ENCODE measurements at regions of chr11 and their contacts with region 1.

Region 1: DNA sequence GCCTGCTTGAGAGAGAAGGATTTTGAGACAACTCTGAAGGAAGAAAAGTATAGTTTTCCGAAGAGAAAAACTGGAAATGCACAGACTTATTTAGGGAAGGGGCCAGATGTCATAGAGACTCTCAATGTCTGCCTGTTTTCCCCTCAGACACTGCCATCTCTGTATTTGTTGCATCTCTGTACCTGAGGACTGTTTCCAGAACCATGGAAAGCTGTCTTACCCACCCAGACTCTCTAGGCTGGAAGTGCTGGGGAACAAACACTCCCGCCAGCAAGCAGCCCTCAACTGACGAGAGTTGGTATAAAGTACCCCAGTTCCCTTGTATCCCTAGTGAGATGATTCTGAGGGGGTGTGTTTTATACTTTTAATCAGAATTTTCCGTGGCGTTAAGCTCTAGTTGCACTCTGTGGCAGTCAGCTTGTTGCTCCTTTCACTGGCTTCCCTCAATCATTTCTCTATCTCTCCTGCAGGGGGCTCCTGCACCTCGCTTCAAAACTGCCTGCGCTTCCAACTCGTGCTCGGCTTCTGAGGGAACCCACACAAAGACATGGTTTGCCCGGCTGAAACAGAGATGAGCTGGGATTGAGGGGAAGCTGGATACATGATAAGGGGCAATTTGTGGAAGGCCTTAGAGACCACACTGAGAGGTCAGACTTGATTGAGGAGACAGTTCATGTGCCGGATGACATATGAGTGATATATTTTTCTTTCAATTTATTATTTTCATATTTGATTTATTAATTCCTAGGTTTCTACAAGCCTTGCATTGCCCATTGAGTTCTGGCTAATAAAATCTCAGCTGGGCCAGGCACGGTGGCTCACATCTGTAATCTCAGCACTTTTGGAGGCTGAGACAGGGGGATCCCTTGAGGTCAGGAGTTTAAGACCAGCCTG is 36.9 kb upstream of the CLPB start:
- DNase-seq: peak; percentile 72
- H3K4me3 ChIP-seq: no peak overlapping the region
- H3K27ac ChIP-seq: no peak overlapping the region
- H3K4me1 ChIP-seq: no peaks in the 10 kb centered on the region
- H3K27me3 ChIP-seq: peaks cover 18 to 31% of the 10 kb centered on the region in 2 experiments
- CTCF ChIP-seq: peak; percentile 84 to 85
- POLR2A ChIP-seq: no peak

Region 2: GRCh38 chr11:72460091-72460647 is 11.1 kb before region 1 on chr11:
- CTCF ChIA-PET with region 1: interaction called, 41 read pairs
- POLR2A ChIA-PET with region 1: no interaction called
- dilution Hi-C with region 1: no loop called
- intact Hi-C with region 1: no loop called
- DNase-seq: no peak
- H3K4me3 ChIP-seq: no peak overlapping the region
- H3K27ac ChIP-seq: no peak overlapping the region
- H3K4me1 ChIP-seq: no peaks in the 10 kb centered on the region
- H3K27me3 ChIP-seq: peaks cover 6 to 39% of the 10 kb centered on the region in 2 experiments
- CTCF ChIP-seq: no peak
- POLR2A ChIP-seq: no peak

Region 3: GRCh38 chr11:72511393-72512047 is 40.3 kb after region 1 on chr11:
- CTCF ChIA-PET with region 1: interaction called, 15 read pairs
- POLR2A ChIA-PET with region 1: no interaction called
- dilution Hi-C with region 1: no loop called
- intact Hi-C with region 1: no loop called
- DNase-seq: no peak
- H3K4me3 ChIP-seq: no peak overlapping the region
- H3K27ac ChIP-seq: no peak overlapping the region
- H3K4me1 ChIP-seq: no peaks in the 10 kb centered on the region
- H3K27me3 ChIP-seq: peaks cover 0 to 1% of the 10 kb centered on the region in 2 experiments
- CTCF ChIP-seq: no peak
- POLR2A ChIP-seq: no peak

Region 4: GRCh38 chr11:72546866-72547265 is 75.6 kb after region 1 on chr11:
- CTCF ChIA-PET with region 1: interaction called, 53 read pairs
- POLR2A ChIA-PET with region 1: no interaction called
- dilution Hi-C with region 1: no loop called
- intact Hi-C with region 1: no loop called
- DNase-seq: no peak
- H3K4me3 ChIP-seq: no peak overlapping the region
- H3K27ac ChIP-seq: no peak overlapping the region
- H3K4me1 ChIP-seq: no peaks in the 10 kb centered on the region
- H3K27me3 ChIP-seq: peaks cover 7 to 12% of the 10 kb centered on the region in 2 experiments
- CTCF ChIP-seq: no peak
- POLR2A ChIP-seq: no peak

Region 5: GRCh38 chr11:72573072-72573854 is 102.0 kb after region 1 on chr11:
- CTCF ChIA-PET with region 1: interaction called, 77 read pairs
- POLR2A ChIA-PET with region 1: no interaction called
- dilution Hi-C with region 1: no loop called
- intact Hi-C with region 1: loop called (anchors 1 kb)
- DNase-seq: peak; percentile 46
- H3K4me3 ChIP-seq: no peak overlapping the region
- H3K27ac ChIP-seq: no peak overlapping the region
- H3K4me1 ChIP-seq: no peaks in the 10 kb centered on the region
- H3K27me3 ChIP-seq: no peaks in the 10 kb centered on the region
- CTCF ChIP-seq: peak; percentile 32 to 75
- POLR2A ChIP-seq: no peak

Region 6: DNA sequence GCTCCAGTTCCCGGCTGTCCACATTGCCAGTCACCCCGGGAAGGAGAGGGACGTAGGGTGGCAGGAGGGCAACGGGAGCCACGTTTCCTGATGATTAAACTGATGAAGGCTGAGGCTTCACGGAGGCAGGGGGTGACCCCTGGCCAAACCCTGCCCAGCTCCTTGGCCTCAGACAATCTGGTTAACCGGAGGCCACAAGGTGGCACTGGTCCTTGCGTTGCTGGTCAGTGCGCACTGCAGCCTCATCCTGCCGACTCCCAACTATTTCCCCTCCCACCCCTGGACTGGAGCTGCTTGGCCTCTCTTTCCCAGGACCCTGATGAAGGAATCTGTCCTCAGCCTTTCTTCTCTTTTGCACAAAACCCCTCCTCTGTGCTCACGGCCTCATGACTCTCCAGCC is 127.7 kb after region 1 on chr11:
- CTCF ChIA-PET with region 1: interaction called, 11 read pairs
- POLR2A ChIA-PET with region 1: no interaction called
- dilution Hi-C with region 1: no loop called
- intact Hi-C with region 1: no loop called
- DNase-seq: peak; percentile 44
- H3K4me3 ChIP-seq: no peak overlapping the region
- H3K27ac ChIP-seq: no peak overlapping the region
- H3K4me1 ChIP-seq: no peaks in the 10 kb centered on the region
- H3K27me3 ChIP-seq: no peaks in the 10 kb centered on the region
- CTCF ChIP-seq: peak; percentile 59 to 85
- POLR2A ChIP-seq: no peak